Activated B cell treated with CpG ODN at 0.5 μM for 24 hours (primary cell): ENCODE measurements at regions of chr4 and their contacts with region 1.

Region 1: DNA sequence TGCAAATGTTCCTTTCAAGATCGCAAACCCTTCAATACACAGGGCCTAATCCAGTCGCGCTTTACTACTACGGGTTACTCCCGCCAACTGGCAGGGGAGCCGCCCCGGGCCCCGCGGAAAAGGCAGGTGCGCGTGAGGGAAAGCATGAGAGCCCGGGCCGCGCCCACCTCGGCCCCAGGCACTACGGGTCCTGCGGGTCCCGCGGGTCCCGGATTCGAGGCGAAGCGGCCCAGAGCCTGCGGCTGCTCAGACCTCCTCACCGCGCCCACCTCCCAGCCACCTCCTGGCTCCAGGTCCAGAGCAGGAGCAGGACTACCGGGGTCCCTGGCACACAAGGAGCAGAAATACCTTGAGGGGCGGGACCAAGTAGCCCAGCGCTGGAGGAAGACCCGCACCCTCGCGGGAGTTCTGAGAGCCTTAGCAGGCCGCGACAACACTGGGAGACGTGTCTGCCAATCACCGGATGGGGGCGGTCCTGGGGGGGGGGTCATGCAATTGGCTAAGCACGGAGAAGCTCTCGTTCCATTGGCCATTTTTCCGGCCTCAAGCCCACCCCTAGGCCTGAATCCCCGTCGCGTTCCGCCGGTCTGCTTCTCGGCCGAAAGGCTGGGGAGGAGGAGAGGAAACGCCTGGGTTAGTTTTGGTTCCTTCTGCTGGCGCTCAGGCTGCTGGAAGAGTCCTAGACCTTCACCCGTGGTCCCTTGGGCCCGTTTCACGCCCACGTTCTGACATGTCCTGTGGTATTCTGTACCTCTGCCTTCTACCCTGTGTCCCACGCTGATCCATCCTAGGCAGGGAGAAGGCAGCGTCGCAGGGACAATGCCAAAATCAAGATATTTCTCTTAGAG is 29.0 kb downstream of the ERVMER34-1 start:
- DNase-seq: peak; percentile 75
- ATAC-seq: peak; percentile 91
- H3K4me3 Mint-ChIP-seq: peak overlapping the region; percentile 84
- H3K27ac Mint-ChIP-seq: peak overlapping the region; percentile 85
- H3K4me1 Mint-ChIP-seq: peaks cover 15% of the 10 kb centered on the region
- H3K27me3 Mint-ChIP-seq: no peaks in the 10 kb centered on the region
- CTCF ChIP-seq: no peak

Region 2: GRCh38 chr4:52659001-52659721 is 63.0 kb before region 1 on chr4 and contains the start of gene USP46:
- CTCF ChIA-PET with region 1: no interaction called
- POLR2A ChIA-PET with region 1: interaction called, 11 read pairs
- intact Hi-C with region 1: loop called (anchors 1 kb)
- DNase-seq: peak; percentile 62
- ATAC-seq: peak; percentile 87
- H3K4me3 Mint-ChIP-seq: peak within 1 kb of the TSS; percentile 88
- H3K27ac Mint-ChIP-seq: peak within 1 kb of the TSS; percentile 76
- H3K4me1 Mint-ChIP-seq: peaks cover 19% of the 10 kb centered on the region
- H3K27me3 Mint-ChIP-seq: no peaks in the 10 kb centered on the region
- CTCF ChIP-seq: no peak
- total RNA-seq, gene USP46: 12.6 and 13.3 TPM in 2 replicates

Region 3: GRCh38 chr4:52701207-52701606 is 21.0 kb before region 1 on chr4:
- CTCF ChIA-PET with region 1: no interaction called
- POLR2A ChIA-PET with region 1: interaction called, 8 read pairs
- intact Hi-C with region 1: loop called (anchors 1 kb)
- DNase-seq: no peak
- ATAC-seq: peak; percentile 79
- H3K4me3 Mint-ChIP-seq: no peak overlapping the region
- H3K27ac Mint-ChIP-seq: peak overlapping the region; percentile 63
- H3K4me1 Mint-ChIP-seq: peaks cover 18% of the 10 kb centered on the region
- H3K27me3 Mint-ChIP-seq: peaks cover 2% of the 10 kb centered on the region
- CTCF ChIP-seq: no peak

Region 4: GRCh38 chr4:52788511-52789205 is 66.5 kb after region 1 on chr4:
- CTCF ChIA-PET with region 1: no interaction called
- POLR2A ChIA-PET with region 1: no interaction called
- intact Hi-C with region 1: no loop called
- DNase-seq: no peak
- ATAC-seq: no peak
- H3K4me3 Mint-ChIP-seq: no peak overlapping the region
- H3K27ac Mint-ChIP-seq: no peak overlapping the region
- H3K4me1 Mint-ChIP-seq: no peaks in the 10 kb centered on the region
- H3K27me3 Mint-ChIP-seq: peaks cover 2% of the 10 kb centered on the region
- CTCF ChIP-seq: no peak

Region 5: GRCh38 chr4:52911684-52912294 is 189.6 kb after region 1 on chr4:
- CTCF ChIA-PET with region 1: no interaction called
- POLR2A ChIA-PET with region 1: interaction called, 4 read pairs
- intact Hi-C with region 1: loop called (anchors 5 kb)
- DNase-seq: peak; percentile 26
- ATAC-seq: no peak
- H3K4me3 Mint-ChIP-seq: no peak overlapping the region
- H3K27ac Mint-ChIP-seq: no peak overlapping the region
- H3K4me1 Mint-ChIP-seq: no peaks in the 10 kb centered on the region
- H3K27me3 Mint-ChIP-seq: no peaks in the 10 kb centered on the region
- CTCF ChIP-seq: peak; percentile 60